H1 (cell line): ENCODE measurements at regions of chr7 and their contacts with region 1.

Region 1: DNA sequence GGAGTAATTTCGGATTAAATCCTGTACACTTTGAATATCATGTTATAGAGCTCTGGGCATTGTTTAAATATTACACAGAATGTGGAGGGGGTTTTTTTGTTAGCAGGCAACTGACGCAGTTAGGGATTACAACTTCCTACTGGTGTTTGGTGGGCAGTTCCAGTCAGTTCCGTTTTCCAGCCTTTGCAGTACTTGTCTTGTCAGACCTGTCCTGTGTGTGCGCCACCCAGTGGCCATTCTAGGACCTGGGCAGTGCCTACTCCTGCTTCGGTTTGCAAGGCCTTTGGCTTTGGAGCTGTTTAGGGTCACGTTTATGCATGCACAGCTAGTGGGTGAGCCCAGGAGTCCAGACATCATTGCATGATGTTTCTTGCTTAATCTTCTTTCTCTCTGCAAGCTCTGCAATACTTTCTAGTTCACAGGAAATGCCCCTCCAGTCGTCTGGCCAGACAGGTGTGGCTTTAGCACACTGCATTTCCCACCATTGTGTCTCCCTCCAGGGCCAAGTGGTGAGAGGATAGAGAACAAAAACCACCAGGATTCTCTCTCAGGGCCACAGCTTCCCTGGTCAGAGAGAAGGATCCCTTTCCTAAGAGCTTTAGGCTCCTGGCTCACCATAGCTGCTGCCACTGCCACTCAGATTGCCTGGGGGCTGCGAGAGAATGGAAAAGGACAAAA is 96.5 kb upstream of the TARP start:
- DNase-seq: peak; percentile 85 to 93
- H3K4me3 ChIP-seq: no peak overlapping the region
- H3K27ac ChIP-seq: no peak overlapping the region
- H3K4me1 ChIP-seq: peaks cover 0 to 6% (median under 1%) of the 10 kb centered on the region in 4 experiments; a peak in 2 of 7 replicates
- H3K27me3 ChIP-seq: no peaks in the 10 kb centered on the region
- CTCF ChIP-seq: peak; percentile 93 to 100 (median 95)
- EP300 ChIP-seq: no peak
- POLR2A ChIP-seq: no peak
- RAD21 ChIP-seq: peak; percentile 28 to 43; a peak in 3 of 4 replicates

Region 2: DNA sequence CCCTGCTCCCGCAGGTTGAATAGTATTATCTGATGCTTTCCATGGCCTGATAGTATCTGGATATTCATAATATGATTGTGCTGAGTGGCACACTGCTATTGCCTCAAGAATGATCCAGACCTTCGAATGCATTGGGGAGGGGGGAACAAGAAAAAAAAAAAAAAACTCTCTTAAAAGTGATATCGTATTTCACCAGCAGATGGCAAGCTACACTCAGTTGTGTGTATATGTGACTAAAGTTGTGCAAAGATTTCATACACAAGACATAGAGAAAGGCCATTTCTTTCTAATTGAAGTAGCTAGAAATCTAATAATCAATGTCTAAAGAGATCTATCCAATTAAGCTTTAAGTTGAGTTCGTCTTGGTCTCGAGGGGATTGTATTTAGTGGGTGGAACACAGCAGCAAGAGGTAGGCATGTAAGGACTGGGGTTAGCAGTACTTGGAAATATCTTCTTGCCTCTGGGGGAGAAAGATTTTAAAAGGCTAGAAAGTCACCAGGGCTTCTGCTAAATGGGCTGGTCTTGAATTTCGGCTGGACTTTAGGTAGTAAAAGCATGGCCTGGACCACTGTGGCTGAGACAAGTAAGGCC is 468.6 kb before region 1 on chr7:
- CTCF ChIA-PET with region 1: interaction called, 14 read pairs
- POLR2A ChIA-PET with region 1: no interaction called
- DNase-seq: no peak
- H3K4me3 ChIP-seq: no peak overlapping the region
- H3K27ac ChIP-seq: no peak overlapping the region
- H3K4me1 ChIP-seq: no peaks in the 10 kb centered on the region
- H3K27me3 ChIP-seq: no peaks in the 10 kb centered on the region
- CTCF ChIP-seq: peak in 2 of 3 experiments; percentile 44 to 55; a peak in 2 of 4 replicates
- EP300 ChIP-seq: no peak
- POLR2A ChIP-seq: no peak
- RAD21 ChIP-seq: peak; percentile 74 to 76

Region 3: GRCh38 chr7:38262545-38262944 is 107.4 kb before region 1 on chr7:
- CTCF ChIA-PET with region 1: no interaction called
- POLR2A ChIA-PET with region 1: no interaction called
- DNase-seq: no peak
- H3K4me3 ChIP-seq: no peak overlapping the region
- H3K27ac ChIP-seq: no peak overlapping the region
- H3K4me1 ChIP-seq: no peaks in the 10 kb centered on the region
- H3K27me3 ChIP-seq: no peaks in the 10 kb centered on the region
- CTCF ChIP-seq: no peak
- EP300 ChIP-seq: no peak
- POLR2A ChIP-seq: no peak
- RAD21 ChIP-seq: no peak

Region 4: GRCh38 chr7:38318803-38319416 is 51.0 kb before region 1 on chr7:
- CTCF ChIA-PET with region 1: interaction called, 11 read pairs
- POLR2A ChIA-PET with region 1: no interaction called
- DNase-seq: peak in 1 of 2 experiments; percentile 83
- H3K4me3 ChIP-seq: no peak overlapping the region
- H3K27ac ChIP-seq: no peak overlapping the region
- H3K4me1 ChIP-seq: peaks cover 0 to 4% (median under 1%) of the 10 kb centered on the region in 4 experiments; a peak in 2 of 7 replicates
- H3K27me3 ChIP-seq: no peaks in the 10 kb centered on the region
- CTCF ChIP-seq: peak; percentile 30 to 81 (median 72)
- EP300 ChIP-seq: 0 out of 3 replicates have a peak, but pooled peaks of 1 of the 2 experiments have one; percentile 38
- POLR2A ChIP-seq: no peak
- RAD21 ChIP-seq: peak; percentile 83 to 86

Region 5: GRCh38 chr7:38382684-38383083 is 12.7 kb after region 1 on chr7:
- CTCF ChIA-PET with region 1: interaction called, 97 read pairs
- POLR2A ChIA-PET with region 1: no interaction called
- DNase-seq: no peak
- H3K4me3 ChIP-seq: no peak overlapping the region
- H3K27ac ChIP-seq: no peak overlapping the region
- H3K4me1 ChIP-seq: no peaks in the 10 kb centered on the region
- H3K27me3 ChIP-seq: no peaks in the 10 kb centered on the region
- CTCF ChIP-seq: no peak
- EP300 ChIP-seq: no peak
- POLR2A ChIP-seq: no peak
- RAD21 ChIP-seq: no peak

Region 6: GRCh38 chr7:38411404-38411803 is 41.4 kb after region 1 on chr7:
- CTCF ChIA-PET with region 1: interaction called, 11 read pairs
- POLR2A ChIA-PET with region 1: no interaction called
- DNase-seq: no peak
- H3K4me3 ChIP-seq: no peak overlapping the region
- H3K27ac ChIP-seq: no peak overlapping the region
- H3K4me1 ChIP-seq: peaks cover 0 to 2% (median 0%) of the 10 kb centered on the region in 4 experiments; a peak in 1 of 7 replicates
- H3K27me3 ChIP-seq: no peaks in the 10 kb centered on the region
- CTCF ChIP-seq: peak in 2 of 3 experiments; percentile 55 to 68; a peak in 2 of 4 replicates
- EP300 ChIP-seq: no peak
- POLR2A ChIP-seq: no peak
- RAD21 ChIP-seq: peak; percentile 29 to 35